Psoas muscle (tissue), 8 donors: ENCODE measurements at regions of chr12 and their contacts with region 1.

Region 1: DNA sequence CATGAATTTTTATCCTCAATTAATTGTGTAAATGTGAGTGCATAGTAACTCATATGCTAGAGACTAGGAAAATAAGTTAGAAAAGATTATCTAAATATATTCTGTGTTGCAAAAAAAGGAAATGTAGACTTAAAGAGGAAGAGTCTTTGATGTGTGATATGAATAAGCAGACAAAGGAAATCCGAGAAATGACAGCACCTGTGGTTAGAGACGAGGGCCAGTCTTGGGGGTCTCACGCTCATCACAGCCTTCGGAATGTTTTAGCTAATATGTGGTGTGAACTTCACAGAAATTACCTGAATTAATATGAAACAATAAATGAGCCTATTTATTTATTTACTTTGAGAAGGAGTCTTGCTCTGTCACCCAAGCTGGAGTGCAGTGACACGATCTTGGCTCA is 11.6 kb downstream of the ATP6V0A2 start:
- DNase-seq: no peak
- ATAC-seq: no peak
- H3K4me3 ChIP-seq: no peak overlapping the region
- H3K27ac ChIP-seq: no peak overlapping the region
- H3K4me1 ChIP-seq: no peaks in the 10 kb centered on the region
- H3K27me3 ChIP-seq: no peaks in the 10 kb centered on the region
- CTCF ChIP-seq: no peak

Region 2: DNA sequence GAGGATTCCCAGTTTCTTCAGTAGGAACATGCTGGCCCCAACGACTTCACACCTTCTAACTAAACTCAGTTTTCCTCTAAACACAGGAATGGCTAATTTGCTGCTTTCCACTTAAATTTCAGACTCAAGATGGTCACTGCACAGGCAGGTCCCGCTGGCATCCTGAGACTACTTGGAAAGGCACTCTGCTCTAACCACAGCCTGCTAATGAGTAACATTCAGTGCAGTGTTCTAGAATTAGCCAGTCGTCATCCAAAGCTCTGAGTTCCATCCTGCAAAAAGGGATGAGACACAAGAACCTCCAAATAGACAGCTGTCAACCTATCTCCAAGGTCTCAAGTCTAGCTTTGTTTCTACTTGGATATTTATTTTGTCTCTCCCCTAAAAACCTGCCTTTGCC is 242.8 kb after region 1 on chr12:
- intact Hi-C with region 1: loop called in 1 of 2 experiments (anchors 10 kb)
- DNase-seq: no peak
- ATAC-seq: peak in 1 of 4 donors; percentile 42
- H3K4me3 ChIP-seq: no peak overlapping the region
- H3K27ac ChIP-seq: no peak overlapping the region
- H3K4me1 ChIP-seq: peaks cover 10% of the 10 kb centered on the region
- H3K27me3 ChIP-seq: no peaks in the 10 kb centered on the region
- CTCF ChIP-seq: no peak